HepG2 (cell line): ENCODE measurements at regions of chr17 and their contacts with region 1.

Region 1: GRCh38 chr17:80575057-80575875 is 30.6 kb downstream of the RPTOR start:
- DNase-seq: peak; percentile 86
- ATAC-seq: peak; percentile 99
- H3K4me3 ChIP-seq: no peak overlapping the region
- H3K27ac ChIP-seq: no peak overlapping the region
- H3K4me1 ChIP-seq: peaks cover 5% of the 10 kb centered on the region; the same call in 1 of the 2 replicates
- H3K27me3 ChIP-seq: no peaks in the 10 kb centered on the region
- CTCF ChIP-seq: peak; percentile 100
- EP300 ChIP-seq: peak in 1 of 2 experiments; percentile 21; a peak in 1 of 4 replicates
- POLR2A ChIP-seq: no peak
- RAD21 ChIP-seq: peak; percentile 99

Region 2: DNA sequence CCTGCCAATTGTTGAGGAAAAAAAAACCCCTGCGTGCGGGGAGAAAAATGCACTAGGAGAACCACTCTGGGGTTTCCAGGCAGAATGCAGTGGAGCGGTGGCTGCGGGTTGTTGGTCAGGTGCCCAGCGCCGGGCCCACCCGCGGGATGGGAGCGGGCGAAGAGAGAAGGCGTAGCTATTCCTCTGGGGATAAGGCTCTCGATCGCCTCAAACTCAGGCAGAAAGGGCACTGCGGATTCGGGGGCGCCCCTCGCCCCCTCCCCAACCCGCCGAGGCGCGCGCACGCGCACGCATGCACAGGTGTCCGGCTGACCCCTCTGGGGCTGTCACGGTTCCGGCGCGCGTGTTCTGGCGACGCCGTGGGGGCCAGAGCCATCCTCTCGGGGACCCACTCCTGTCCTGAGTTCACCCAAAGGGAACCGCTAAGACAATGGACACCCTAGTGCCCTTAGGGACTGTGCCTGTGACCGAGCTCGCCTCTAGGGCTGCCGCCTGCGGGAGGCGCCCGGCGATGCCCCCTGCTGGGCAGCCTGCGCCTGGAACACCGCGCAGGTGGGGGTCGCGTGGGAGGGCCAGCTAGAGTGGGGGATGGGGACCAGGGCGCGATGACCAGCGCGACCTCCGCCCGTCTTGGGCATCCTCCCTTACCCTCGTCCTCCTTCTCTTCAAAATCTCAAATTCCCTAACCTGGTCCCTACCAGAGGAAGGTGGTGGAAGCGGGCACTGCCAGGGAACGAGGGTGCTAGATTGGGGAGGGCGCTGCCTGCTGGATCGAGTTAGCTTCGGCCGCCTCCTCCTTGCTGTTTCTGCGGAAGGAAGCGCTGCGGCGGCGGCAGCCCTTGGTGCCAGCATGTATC is 764.0 kb before region 1 on chr17:
- CTCF ChIA-PET with region 1: no interaction called
- POLR2A ChIA-PET with region 1: no interaction called
- in situ Hi-C with region 1: no loop called
- intact Hi-C with region 1: no loop called
- DNase-seq: peak; percentile 64
- ATAC-seq: peak; percentile 64
- H3K4me3 ChIP-seq: peak overlapping the region in 1 of 3 experiments; percentile 58; a peak in 2 of 6 replicates
- H3K27ac ChIP-seq: no peak overlapping the region
- H3K4me1 ChIP-seq: peaks cover 42% of the 10 kb centered on the region
- H3K27me3 ChIP-seq: peaks cover 21 to 61% of the 10 kb centered on the region in 2 experiments
- CTCF ChIP-seq: peak; percentile 94
- EP300 ChIP-seq: 0 out of 4 replicates have a peak, but pooled peaks of 1 of the 2 experiments have one; percentile 14
- POLR2A ChIP-seq: no peak
- RAD21 ChIP-seq: peak; percentile 92

Region 3: DNA sequence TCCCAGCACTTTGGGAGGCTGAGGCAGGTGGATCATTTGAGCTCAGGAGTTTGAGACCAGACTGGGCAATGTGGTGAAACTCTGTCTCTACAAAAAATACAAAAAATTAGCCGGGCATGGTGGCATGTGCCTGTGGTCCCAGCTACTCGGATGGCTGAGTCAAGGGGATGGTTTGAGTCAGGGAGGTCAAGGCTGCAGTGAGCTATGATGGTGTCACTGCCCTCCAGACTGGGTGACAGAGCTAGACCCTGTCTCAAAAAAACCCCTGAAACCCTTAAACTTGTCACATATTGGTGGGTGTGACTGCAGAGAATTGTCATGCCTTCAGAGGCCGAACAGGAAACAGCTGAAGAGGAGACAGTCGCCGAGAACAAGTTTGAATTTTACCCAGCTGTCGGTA is 17.2 kb before region 1 on chr17:
- CTCF ChIA-PET with region 1: no interaction called
- POLR2A ChIA-PET with region 1: no interaction called
- in situ Hi-C with region 1: no loop called
- intact Hi-C with region 1: no loop called
- DNase-seq: no peak
- ATAC-seq: no peak
- H3K4me3 ChIP-seq: no peak overlapping the region
- H3K27ac ChIP-seq: no peak overlapping the region
- H3K4me1 ChIP-seq: no peaks in the 10 kb centered on the region
- H3K27me3 ChIP-seq: no peaks in the 10 kb centered on the region
- CTCF ChIP-seq: no peak
- EP300 ChIP-seq: no peak
- POLR2A ChIP-seq: no peak
- RAD21 ChIP-seq: no peak

Region 4: DNA sequence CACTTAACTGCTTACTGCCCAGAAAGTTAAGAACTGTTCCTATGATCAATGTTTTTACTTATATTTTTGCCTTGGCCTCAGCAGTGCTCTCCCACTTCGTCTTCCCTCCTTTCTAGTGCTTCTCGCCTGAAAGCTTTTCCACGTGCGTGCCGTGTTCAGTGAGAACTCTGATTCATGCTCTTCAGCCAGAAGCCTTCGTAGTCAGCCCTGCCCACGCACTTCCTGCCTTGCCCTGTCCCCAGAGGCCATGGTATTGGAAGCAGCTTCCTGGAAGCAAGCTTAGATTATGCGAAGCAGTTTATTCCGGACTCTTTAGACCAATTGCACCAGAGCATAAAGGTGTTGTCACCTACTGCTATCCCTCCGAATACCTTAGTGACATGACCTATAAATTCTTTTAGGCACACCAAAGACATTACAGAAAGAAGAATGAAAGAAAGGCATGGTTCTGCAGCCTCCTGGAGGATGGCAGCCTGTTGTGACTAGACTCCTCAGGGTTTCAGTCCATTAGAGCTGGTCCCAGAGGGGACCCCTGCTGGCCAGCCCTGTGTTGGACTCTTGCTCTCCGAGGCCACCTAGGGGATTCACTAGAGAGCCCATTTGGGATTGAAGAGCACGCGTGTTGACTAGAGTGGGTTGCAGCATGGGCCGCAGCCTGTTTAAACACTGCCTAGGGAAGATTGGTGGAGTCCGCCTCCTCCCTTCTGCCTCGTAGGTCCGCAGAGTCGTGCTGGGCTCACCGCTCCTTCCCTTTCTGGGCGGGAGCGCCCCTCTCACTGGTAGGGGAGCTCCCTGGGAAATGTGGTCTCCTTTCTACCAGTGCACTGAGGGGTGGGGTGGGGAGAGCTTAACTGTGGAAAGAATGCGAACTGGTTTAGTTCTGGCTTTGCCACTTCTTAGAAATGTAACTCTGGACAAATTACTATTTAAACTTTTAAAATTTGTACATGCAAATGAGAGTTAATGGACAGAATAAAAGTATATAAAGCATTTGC is 74.7 kb after region 1 on chr17:
- CTCF ChIA-PET with region 1: interaction called, 37 read pairs
- POLR2A ChIA-PET with region 1: no interaction called
- in situ Hi-C with region 1: no loop called
- intact Hi-C with region 1: loop called (anchors 1 kb)
- DNase-seq: peak; percentile 77
- ATAC-seq: peak; percentile 98
- H3K4me3 ChIP-seq: no peak overlapping the region
- H3K27ac ChIP-seq: no peak overlapping the region
- H3K4me1 ChIP-seq: peaks cover 14% of the 10 kb centered on the region
- H3K27me3 ChIP-seq: no peaks in the 10 kb centered on the region
- CTCF ChIP-seq: peak; percentile 78
- EP300 ChIP-seq: no peak
- POLR2A ChIP-seq: no peak
- RAD21 ChIP-seq: peak; percentile 96